ENCODE measurements at regions of chr18 and their contacts with region 1.

Region 1: DNA sequence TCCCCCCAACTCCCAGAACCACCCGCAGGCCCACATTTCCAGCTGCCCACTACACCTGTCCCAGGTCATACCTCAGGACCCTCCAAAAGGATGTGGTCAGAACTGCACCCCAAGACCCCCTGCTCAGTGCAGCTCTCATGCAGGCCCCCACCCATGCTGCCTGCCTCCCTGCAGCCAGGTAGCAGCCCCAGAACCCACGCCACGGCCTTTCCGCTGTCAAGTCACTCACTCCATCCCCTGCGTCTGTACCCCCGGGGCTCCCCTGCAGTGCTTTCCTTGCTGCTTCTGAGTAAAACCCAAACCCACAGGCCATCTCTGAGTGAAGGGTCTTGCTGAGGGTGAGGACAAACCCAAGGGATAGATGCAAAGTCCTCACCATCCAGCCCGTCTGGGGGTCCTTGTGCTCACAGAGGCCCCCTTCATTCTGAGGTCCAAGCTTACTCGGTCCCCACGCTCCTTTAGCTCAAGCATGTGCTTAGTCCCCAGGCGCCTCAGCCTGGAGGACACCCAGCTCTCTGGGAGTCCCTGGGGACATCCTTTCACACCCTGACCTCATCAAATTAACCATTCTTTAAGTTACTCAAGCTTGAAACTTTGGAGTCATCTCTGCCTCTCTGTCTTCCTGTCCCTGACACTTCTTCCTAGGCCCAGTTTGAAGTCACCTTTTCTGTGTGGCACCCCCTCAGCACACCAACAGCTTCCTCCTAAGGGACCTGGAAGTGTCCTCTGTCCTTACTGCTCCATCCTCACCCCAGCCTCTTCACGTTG is 130.1 kb downstream of the SMAD7 start:
- DNase-seq: no peak
- H3K4me3 ChIP-seq: no peak overlapping the region
- H3K4me3 Mint-ChIP-seq: no peak overlapping the region
- H3K27ac ChIP-seq: no peak overlapping the region
- H3K27ac Mint-ChIP-seq: peak overlapping the region in 5 of 7 donors; percentile 25 to 88 (median 70)
- H3K4me1 ChIP-seq: peaks cover 18% of the 10 kb centered on the region
- H3K4me1 Mint-ChIP-seq: peaks cover 19 to 50% (median 22%) of the 10 kb centered on the region in 4 donors
- H3K27me3 ChIP-seq: no peaks in the 10 kb centered on the region
- H3K27me3 Mint-ChIP-seq: no peaks in the 10 kb centered on the region

Region 2: GRCh38 chr18:48834413-48835031 is 13.9 kb after region 1 on chr18:
- CTCF ChIA-PET with region 1: interaction called, 8 read pairs
- POLR2A ChIA-PET with region 1: interaction called, 101 read pairs
- intact Hi-C with region 1: no loop called
- DNase-seq: peak; percentile 58 to 90 (median 62)
- H3K4me3 ChIP-seq: peak overlapping the region; percentile 42 to 54
- H3K4me3 Mint-ChIP-seq: peak overlapping the region; percentile 81 to 98 (median 90)
- H3K27ac ChIP-seq: peak overlapping the region; percentile 74
- H3K27ac Mint-ChIP-seq: peak overlapping the region; percentile 90 to 97 (median 96)
- H3K4me1 ChIP-seq: peaks cover 100% of the 10 kb centered on the region
- H3K4me1 Mint-ChIP-seq: peaks cover 59 to 100% (median 79%) of the 10 kb centered on the region in 4 donors
- H3K27me3 ChIP-seq: no peaks in the 10 kb centered on the region
- H3K27me3 Mint-ChIP-seq: no peaks in the 10 kb centered on the region

Measured in CD4-positive, alpha-beta memory T cell (primary cell).